ENCODE measurements at regions of chr4 and their contacts with region 1.

Region 1: GRCh38 chr4:122356317-122356808 is 22.4 kb upstream of the ADAD1 start:
- DNase-seq: no peak
- ATAC-seq: no peak
- H3K4me3 ChIP-seq: no peak overlapping the region
- H3K4me3 Mint-ChIP-seq: no peak overlapping the region
- H3K27ac ChIP-seq: no peak overlapping the region
- H3K27ac Mint-ChIP-seq: no peak overlapping the region
- H3K4me1 ChIP-seq: no peaks in the 10 kb centered on the region
- H3K4me1 Mint-ChIP-seq: peaks cover 0 to 4% (median 0%) of the 10 kb centered on the region in 3 donors
- H3K27me3 ChIP-seq: no peaks in the 10 kb centered on the region
- H3K27me3 Mint-ChIP-seq: no peaks in the 10 kb centered on the region

Region 2: GRCh38 chr4:122309988-122310626 is 46.3 kb before region 1 on chr4:
- CTCF ChIA-PET with region 1: no interaction called
- POLR2A ChIA-PET with region 1: no interaction called
- DNase-seq: peak in 1 of 35 experiments; percentile 11
- ATAC-seq: no peak
- H3K4me3 ChIP-seq: no peak overlapping the region
- H3K4me3 Mint-ChIP-seq: no peak overlapping the region
- H3K27ac ChIP-seq: no peak overlapping the region
- H3K27ac Mint-ChIP-seq: no peak overlapping the region
- H3K4me1 ChIP-seq: no peaks in the 10 kb centered on the region
- H3K4me1 Mint-ChIP-seq: peaks cover 0 to 2% (median 0%) of the 10 kb centered on the region in 3 donors
- H3K27me3 ChIP-seq: no peaks in the 10 kb centered on the region
- H3K27me3 Mint-ChIP-seq: no peaks in the 10 kb centered on the region

Region 3: DNA sequence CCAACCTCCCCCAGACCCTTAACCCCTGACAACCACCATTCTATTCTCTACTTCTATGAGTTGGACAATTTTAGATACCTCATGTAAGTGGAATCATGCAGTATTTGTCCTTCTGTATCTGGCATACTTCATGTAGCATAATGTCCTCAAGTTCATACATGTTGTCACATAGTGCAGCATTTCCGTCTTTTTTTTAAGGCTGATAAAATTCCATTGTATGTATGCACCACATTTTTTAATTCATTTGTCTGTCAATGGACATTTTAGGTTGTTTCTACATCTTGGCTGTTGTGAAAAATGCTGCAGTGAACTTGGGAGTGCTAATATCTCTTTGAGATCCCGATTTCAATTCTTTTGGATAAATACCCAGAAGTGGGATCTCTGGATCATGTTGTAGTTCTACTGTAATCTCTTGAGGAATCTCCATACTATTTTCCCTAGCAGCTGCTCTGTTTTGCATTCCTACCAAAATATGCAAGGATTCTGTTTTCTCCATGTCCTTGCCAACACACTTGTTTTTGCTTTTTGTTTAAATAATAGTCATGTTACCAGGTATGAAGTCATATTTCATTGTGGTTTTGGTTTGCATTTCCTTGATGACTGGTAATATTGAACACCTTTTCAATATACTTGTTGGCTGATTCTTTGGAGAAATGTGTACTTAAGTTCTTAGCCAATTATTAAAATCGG is 26.3 kb before region 1 on chr4:
- CTCF ChIA-PET with region 1: no interaction called
- POLR2A ChIA-PET with region 1: interaction called in 1 of 2 experiments, 13 read pairs
- DNase-seq: no peak
- ATAC-seq: no peak
- H3K4me3 ChIP-seq: no peak overlapping the region
- H3K4me3 Mint-ChIP-seq: no peak overlapping the region
- H3K27ac ChIP-seq: no peak overlapping the region
- H3K27ac Mint-ChIP-seq: no peak overlapping the region
- H3K4me1 ChIP-seq: no peaks in the 10 kb centered on the region
- H3K4me1 Mint-ChIP-seq: peaks cover 0 to 11% (median 9%) of the 10 kb centered on the region in 3 donors
- H3K27me3 ChIP-seq: no peaks in the 10 kb centered on the region
- H3K27me3 Mint-ChIP-seq: no peaks in the 10 kb centered on the region